ENCODE measurements at regions of chr3 and their contacts with region 1.

Region 1: DNA sequence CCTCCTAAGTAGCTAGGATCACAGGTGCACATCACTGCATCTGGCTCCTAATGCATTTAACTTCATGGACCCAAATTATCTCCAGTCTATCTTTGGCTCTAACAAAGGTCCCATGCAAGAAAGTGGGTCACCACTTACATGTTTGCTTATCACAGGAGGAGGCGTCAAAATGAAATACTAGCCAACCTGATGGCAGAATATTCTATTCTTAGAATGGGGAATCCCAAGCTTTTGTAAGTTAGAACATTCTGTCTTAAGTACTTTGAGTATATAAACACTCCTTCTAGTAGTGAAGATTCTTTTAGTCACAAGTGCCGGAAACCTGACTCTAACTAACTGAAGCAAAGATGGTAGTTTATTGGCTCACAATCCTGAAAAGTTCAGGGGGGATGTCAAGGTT is 72.0 kb upstream of the ADAMTS9 start:
- DNase-seq: no peak
- ATAC-seq: peak; percentile 70 to 74

Region 2: DNA sequence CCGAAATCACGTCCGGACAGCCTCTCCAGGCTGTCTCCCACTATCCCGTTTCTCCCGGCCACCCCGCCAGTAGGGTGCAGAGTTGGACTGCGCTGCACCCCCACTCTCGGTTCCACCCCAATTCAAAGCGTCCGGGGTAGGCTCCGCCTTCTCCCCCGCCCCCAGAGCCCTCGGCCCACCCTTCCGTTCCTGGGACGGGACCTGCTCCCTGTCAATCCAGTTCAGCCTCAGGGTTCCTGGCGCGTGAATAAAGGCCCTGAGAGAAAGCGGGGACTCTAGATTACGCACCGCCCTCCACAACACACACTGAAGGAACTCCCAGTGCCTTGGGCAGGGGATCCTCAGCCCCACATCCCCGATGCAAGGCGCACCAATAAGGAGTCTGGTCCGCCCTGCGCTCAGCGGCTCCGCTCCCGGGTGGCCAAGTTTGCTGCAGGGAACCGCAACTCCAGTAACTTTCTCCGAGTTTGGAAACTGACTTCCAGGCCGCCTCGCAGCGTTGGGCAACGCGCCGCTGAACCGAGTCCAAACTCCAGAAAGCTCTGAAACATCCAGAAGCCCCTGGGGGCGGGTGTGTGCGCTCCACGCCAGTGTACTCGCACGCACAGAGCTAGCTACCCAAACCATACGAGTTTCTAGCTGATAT is 73.9 kb before region 1 on chr3:
- intact Hi-C with region 1: loop called in 1 of 2 experiments (anchors 5 kb)
- DNase-seq: peak; percentile 92
- ATAC-seq: peak; percentile 89 to 91

Region 3: GRCh38 chr3:65030847-65031558 is 271.2 kb after region 1 on chr3:
- intact Hi-C with region 1: no loop called
- DNase-seq: no peak
- ATAC-seq: no peak